Esophagus muscularis mucosa (tissue), 4 donors: ENCODE measurements at regions of chr3 and their contacts with region 1.

Region 1: DNA sequence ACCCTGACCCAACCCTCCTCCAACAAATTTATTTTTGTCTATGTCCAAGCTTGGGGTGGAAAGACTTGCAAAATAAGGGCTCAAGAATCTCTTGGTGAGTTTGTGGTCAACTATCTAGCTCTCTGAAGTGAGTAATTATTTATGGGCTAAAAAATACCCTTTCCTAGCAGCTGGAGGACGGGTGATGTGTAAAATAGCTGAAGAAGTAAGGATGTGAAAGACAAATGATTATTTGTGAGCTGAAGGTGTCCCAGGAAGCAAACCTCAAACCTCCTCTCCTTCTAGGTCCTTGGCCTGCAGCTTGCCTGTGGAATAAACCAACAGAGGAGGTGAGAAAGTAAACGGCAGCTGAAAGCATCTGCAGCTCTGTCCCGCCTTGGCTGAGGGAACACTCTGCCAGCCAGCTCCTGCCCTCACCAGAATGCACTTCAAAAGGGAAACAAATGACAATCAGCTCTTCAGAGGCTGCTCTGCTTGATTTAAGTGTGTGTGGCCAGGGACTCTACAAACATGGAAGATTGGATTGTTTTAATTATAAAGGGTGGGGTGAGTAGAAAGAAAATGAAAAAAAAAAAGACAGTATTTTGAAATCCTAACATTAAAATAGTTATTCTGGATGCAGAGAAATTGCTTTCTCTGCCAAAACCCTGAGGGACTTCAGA is 60.3 kb downstream of the TM4SF4 start:
- DNase-seq: no peak
- H3K4me3 ChIP-seq: peak overlapping the region in 2 of 4 donors; percentile 15 to 20
- H3K27ac ChIP-seq: peak overlapping the region; percentile 53 to 81 (median 74)
- H3K4me1 ChIP-seq: peaks cover 43 to 98% (median 94%) of the 10 kb centered on the region in 4 donors
- H3K27me3 ChIP-seq: no peaks in the 10 kb centered on the region
- CTCF ChIP-seq: no peak
- EP300 ChIP-seq: no peak
- POLR2A ChIP-seq: no peak

Region 2: GRCh38 chr3:149575961-149576564 is 41.3 kb after region 1 on chr3:
- intact Hi-C with region 1: loop called (anchors 5 kb)
- DNase-seq: no peak
- H3K4me3 ChIP-seq: peak overlapping the region in 3 of 4 donors; percentile 4 to 25 (median 16)
- H3K27ac ChIP-seq: peak overlapping the region; percentile 82 to 86 (median 84)
- H3K4me1 ChIP-seq: peaks cover 69 to 100% (median 98%) of the 10 kb centered on the region in 4 donors
- H3K27me3 ChIP-seq: no peaks in the 10 kb centered on the region
- CTCF ChIP-seq: no peak
- EP300 ChIP-seq: peak; percentile 41
- POLR2A ChIP-seq: no peak